ENCODE measurements at regions of chr20 and their contacts with region 1.

Region 1: DNA sequence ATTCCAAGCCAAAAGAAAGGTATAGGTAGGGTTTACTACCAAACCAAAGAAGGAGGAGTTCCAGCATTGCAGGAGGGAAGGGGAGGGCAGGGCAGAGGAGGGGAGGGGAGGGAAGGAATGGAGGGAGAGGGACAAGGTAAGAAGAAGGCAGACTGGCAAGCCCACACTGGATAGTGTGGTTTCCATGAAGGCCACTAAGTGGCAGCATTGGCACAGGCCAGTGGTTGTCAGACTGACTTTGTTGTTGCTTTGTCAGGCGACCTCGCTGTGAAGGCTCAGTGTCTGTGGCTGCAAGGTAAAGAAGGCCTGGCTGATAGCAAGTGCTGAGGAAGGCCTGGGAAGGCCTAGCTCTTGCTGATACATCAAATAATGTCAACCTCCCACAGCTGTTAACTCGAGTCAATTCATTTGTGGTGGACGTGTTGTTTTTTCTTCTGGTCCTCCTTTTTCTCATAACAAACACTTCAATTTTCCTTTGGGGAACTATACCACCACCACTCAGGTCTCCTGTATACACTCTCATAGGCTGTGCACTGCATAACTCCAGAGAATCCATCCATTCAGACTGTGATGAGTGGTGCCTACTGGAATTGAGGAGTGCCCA is 7.7 kb upstream of the ZNF334 start:
- DNase-seq: peak; percentile 77 to 80
- H3K4me3 ChIP-seq: no peak overlapping the region
- H3K4me3 Mint-ChIP-seq: no peak overlapping the region
- H3K27ac Mint-ChIP-seq: no peak overlapping the region
- H3K4me1 ChIP-seq: no peaks in the 10 kb centered on the region
- H3K4me1 Mint-ChIP-seq: no peaks in the 10 kb centered on the region
- H3K27me3 ChIP-seq: no peaks in the 10 kb centered on the region
- H3K27me3 Mint-ChIP-seq: peaks cover 4% of the 10 kb centered on the region
- CTCF ChIP-seq: peak; percentile 85 to 93

Region 2: GRCh38 chr20:46699651-46700359 is 178.7 kb after region 1 on chr20:
- CTCF ChIA-PET with region 1: no interaction called
- POLR2A ChIA-PET with region 1: no interaction called
- intact Hi-C with region 1: loop called (anchors 1 kb)
- DNase-seq: peak in 1 of 2 experiments; percentile 70
- H3K4me3 ChIP-seq: no peak overlapping the region
- H3K4me3 Mint-ChIP-seq: no peak overlapping the region
- H3K27ac Mint-ChIP-seq: no peak overlapping the region
- H3K4me1 ChIP-seq: peaks cover 3% of the 10 kb centered on the region; the same call in 1 of the 2 replicates
- H3K4me1 Mint-ChIP-seq: no peaks in the 10 kb centered on the region
- H3K27me3 ChIP-seq: 0 out of 2 replicates have a peak, but pooled peaks cover 1% of the 10 kb centered on the region
- H3K27me3 Mint-ChIP-seq: no peaks in the 10 kb centered on the region
- CTCF ChIP-seq: peak; percentile 95 to 98

Region 3: DNA sequence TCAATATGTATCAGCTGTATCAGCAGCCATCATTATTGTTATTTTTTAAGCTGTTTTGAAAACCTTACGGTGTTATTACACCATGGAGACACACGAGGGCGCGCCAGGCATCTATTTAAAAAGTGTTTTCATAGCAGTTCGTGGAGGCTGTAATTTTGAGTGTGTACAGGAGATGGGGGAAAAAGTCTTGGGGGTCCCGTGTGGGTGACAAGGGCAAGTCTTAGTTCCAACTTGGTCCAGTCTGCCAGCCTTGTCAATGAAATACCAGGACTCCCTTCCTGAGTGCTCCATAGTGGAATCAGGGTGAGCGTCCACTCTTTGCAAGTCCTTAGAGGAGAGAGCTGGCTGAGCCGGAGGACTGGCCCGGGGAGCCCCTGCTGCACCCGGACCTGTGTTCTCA is 231.7 kb after region 1 on chr20:
- CTCF ChIA-PET with region 1: no interaction called
- POLR2A ChIA-PET with region 1: no interaction called
- intact Hi-C with region 1: loop called (anchors 1 kb)
- DNase-seq: peak; percentile 77 to 81
- H3K4me3 ChIP-seq: no peak overlapping the region
- H3K4me3 Mint-ChIP-seq: no peak overlapping the region
- H3K27ac Mint-ChIP-seq: no peak overlapping the region
- H3K4me1 ChIP-seq: 0 out of 2 replicates have a peak, but pooled peaks cover under 1% of the 10 kb centered on the region
- H3K4me1 Mint-ChIP-seq: peaks cover 7% of the 10 kb centered on the region
- H3K27me3 ChIP-seq: no peaks in the 10 kb centered on the region
- H3K27me3 Mint-ChIP-seq: peaks cover 21% of the 10 kb centered on the region
- CTCF ChIP-seq: peak; percentile 90 to 94